ENCODE measurements at regions of chr10 and their contacts with region 1.

Region 1: GRCh38 chr10:84147347-84147746 is 8.0 kb downstream of the GHITM start:
- DNase-seq: no peak
- ATAC-seq: no peak
- H3K4me3 Mint-ChIP-seq: no peak overlapping the region
- H3K27ac Mint-ChIP-seq: no peak overlapping the region
- H3K4me1 Mint-ChIP-seq: peaks cover 6% of the 10 kb centered on the region
- H3K27me3 Mint-ChIP-seq: no peaks in the 10 kb centered on the region

Region 2: GRCh38 chr10:83896219-83896618 is 251.1 kb before region 1 on chr10:
- CTCF ChIA-PET with region 1: no interaction called
- DNase-seq: no peak
- ATAC-seq: no peak
- H3K4me3 Mint-ChIP-seq: no peak overlapping the region
- H3K27ac Mint-ChIP-seq: no peak overlapping the region
- H3K4me1 Mint-ChIP-seq: no peaks in the 10 kb centered on the region
- H3K27me3 Mint-ChIP-seq: no peaks in the 10 kb centered on the region

Region 3: DNA sequence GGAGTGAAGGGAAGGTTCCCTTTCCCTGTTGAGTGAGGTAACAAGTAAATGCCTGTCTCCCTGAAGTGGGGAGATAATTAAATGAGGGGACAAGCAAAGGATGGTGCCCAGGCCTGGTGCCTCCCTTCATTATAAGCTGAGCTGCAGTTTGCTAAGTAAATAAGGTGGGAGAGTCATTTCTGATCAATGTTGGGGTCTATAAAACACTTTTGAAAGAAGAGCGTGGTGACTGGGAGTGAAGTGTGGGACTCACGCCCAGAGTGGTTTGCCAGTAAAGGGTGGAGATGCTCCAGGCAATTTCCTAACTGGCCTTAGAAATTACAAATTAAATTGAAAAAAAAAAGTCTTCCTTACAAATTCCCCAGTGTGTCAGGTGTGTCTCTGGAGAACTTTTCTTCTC is 16.6 kb after region 1 on chr10:
- CTCF ChIA-PET with region 1: interaction called, 20 read pairs
- DNase-seq: no peak
- ATAC-seq: no peak
- H3K4me3 Mint-ChIP-seq: no peak overlapping the region
- H3K27ac Mint-ChIP-seq: no peak overlapping the region
- H3K4me1 Mint-ChIP-seq: peaks cover 2% of the 10 kb centered on the region
- H3K27me3 Mint-ChIP-seq: peaks cover 20% of the 10 kb centered on the region

Region 4: GRCh38 chr10:84177541-84178141 is 30.3 kb after region 1 on chr10:
- CTCF ChIA-PET with region 1: interaction called, 16 read pairs
- DNase-seq: peak; percentile 87
- ATAC-seq: peak; percentile 91
- H3K4me3 Mint-ChIP-seq: no peak overlapping the region
- H3K27ac Mint-ChIP-seq: no peak overlapping the region
- H3K4me1 Mint-ChIP-seq: peaks cover 5% of the 10 kb centered on the region
- H3K27me3 Mint-ChIP-seq: no peaks in the 10 kb centered on the region

Region 5: DNA sequence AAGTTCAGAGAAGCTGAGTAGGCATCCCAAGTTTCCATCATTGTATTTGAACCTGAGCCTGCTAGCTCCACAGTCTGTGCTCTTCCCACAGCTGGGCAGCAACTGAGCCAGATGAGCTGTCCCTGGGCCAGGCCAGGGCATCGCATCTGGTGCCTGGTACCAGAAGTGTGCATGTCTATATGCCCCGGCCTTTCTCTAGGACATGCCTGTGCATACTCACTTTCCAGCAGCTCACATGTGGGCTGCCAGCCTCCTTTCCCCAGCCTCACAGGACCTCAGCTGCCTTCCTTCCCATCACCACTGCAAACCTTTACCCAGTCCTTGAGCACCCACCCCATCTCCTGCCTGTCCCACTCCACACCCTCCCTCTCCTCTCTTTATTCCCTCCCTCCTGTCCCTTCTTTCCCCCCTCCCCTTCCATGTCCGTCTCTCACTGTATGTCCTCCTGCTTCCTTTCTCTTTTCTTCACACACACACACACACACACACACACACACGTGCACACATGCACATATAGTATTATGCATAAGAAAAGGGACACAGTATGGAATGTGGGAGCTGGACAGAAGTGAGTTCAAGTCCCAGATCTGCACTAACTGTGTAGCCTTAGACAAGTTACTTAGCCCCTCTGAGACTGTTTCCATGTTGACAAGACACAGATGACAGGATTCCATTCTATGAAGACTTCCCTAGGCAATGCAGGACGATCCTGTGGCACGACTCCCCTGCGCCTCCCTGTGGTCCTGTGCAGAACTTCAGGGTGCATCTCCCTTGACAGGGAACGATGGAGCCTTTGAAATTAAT is 57.9 kb after region 1 on chr10:
- CTCF ChIA-PET with region 1: interaction called, 65 read pairs
- DNase-seq: peak; percentile 79
- ATAC-seq: peak; percentile 88
- H3K4me3 Mint-ChIP-seq: no peak overlapping the region
- H3K27ac Mint-ChIP-seq: no peak overlapping the region
- H3K4me1 Mint-ChIP-seq: no peaks in the 10 kb centered on the region
- H3K27me3 Mint-ChIP-seq: peaks cover 11% of the 10 kb centered on the region

Region 6: GRCh38 chr10:84214612-84215235 is 67.4 kb after region 1 on chr10:
- CTCF ChIA-PET with region 1: interaction called, 34 read pairs
- DNase-seq: peak; percentile 62
- ATAC-seq: peak; percentile 89
- H3K4me3 Mint-ChIP-seq: peak overlapping the region; percentile 38
- H3K27ac Mint-ChIP-seq: no peak overlapping the region
- H3K4me1 Mint-ChIP-seq: no peaks in the 10 kb centered on the region
- H3K27me3 Mint-ChIP-seq: no peaks in the 10 kb centered on the region